Breast epithelium (tissue), 4 donors: ENCODE measurements at regions of chr18 and their contacts with region 1.

Region 1: DNA sequence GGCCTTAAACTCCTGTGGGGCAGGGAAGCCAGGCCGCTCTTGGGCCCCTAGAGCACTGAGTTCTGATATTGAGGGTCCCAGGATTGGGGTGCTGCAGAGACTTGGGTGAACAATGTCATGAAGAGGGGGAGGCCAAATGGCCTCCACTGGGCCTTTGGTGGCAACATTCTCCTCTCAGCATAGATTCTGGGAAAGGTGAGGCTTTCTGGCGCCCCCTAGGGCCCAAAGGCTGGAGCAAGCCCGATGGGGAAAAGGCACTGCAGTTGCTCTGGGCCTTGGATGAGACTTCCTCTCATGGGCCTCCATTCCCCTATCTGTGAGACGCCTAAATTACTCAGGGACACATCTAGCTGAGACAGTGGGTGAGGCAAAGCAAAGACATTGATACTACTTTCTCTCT is 84.8 kb downstream of the ACAA2 start:
- DNase-seq: no peak
- H3K4me3 ChIP-seq: no peak overlapping the region
- H3K27ac ChIP-seq: no peak overlapping the region
- H3K4me1 ChIP-seq: no peaks in the 10 kb centered on the region
- H3K27me3 ChIP-seq: no peaks in the 10 kb centered on the region
- CTCF ChIP-seq: peak in 1 of 3 donors; percentile 27
- POLR2A ChIP-seq: no peak

Region 2: DNA sequence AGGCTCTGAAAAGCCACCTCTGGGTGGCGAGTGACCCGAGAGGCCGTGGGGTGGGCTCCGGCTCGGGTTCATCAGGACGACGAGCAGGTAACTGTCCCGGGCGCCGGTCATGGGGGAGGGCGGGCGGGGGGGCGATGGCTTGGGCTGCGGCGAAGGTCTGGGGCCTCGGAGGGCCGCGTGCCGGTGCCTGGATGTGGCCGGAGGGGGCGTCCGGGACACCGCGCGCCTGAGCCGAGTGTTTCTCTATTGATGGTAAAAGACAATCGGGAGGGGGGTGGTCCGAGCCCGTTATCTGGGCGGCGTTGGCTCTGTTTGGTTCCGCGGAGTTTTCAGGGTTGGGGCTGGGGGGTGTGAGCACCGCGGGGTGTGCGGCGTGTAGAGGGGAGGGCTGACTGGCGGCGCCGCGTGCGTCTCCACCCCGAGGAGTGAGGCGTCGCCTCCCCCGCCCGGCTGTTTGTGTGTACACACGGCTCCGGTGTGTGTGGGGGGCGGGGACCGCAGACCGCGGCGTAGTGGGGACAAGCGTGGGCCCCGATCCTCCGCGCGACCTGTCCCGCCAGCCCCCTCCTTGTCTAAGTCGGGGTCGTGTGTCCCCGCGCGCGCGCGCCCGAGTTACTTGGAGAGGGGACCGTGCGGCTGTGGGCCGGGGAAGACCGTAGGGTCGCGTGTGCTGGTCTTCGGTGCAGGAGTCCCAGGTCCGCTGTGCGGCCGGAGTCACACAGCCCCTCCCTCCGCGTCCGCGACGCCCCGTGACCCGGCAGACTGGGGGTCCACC is 1188.1 kb before region 1 on chr18:
- intact Hi-C with region 1: loop called (anchors 5 kb)
- DNase-seq: peak; percentile 52 to 59
- H3K4me3 ChIP-seq: peak overlapping the region; percentile 79 to 89 (median 82)
- H3K27ac ChIP-seq: peak overlapping the region; percentile 93
- H3K4me1 ChIP-seq: peaks cover 0 to 4% of the 10 kb centered on the region in 2 donors
- H3K27me3 ChIP-seq: no peaks in the 10 kb centered on the region
- CTCF ChIP-seq: no peak
- POLR2A ChIP-seq: no peak